CD4-positive, alpha-beta memory T cell (primary cell): ENCODE measurements at regions of chr18 and their contacts with region 1.

Region 1: GRCh38 chr18:3447895-3448837 is 1.8 kb upstream of the TGIF1 start:
- DNase-seq: peak; percentile 84 to 91 (median 89)
- H3K4me3 ChIP-seq: peak overlapping the region; percentile 74 to 84
- H3K4me3 Mint-ChIP-seq: peak overlapping the region; percentile 93 to 98 (median 96)
- H3K27ac ChIP-seq: peak overlapping the region; percentile 94
- H3K27ac Mint-ChIP-seq: peak overlapping the region; percentile 99 to 100 (median 100)
- H3K4me1 ChIP-seq: peaks cover 21% of the 10 kb centered on the region
- H3K4me1 Mint-ChIP-seq: peaks cover 9 to 53% (median 22%) of the 10 kb centered on the region in 4 donors
- H3K27me3 ChIP-seq: no peaks in the 10 kb centered on the region
- H3K27me3 Mint-ChIP-seq: peaks cover 0 to 6% of the 10 kb centered on the region in 2 donors

Region 2: DNA sequence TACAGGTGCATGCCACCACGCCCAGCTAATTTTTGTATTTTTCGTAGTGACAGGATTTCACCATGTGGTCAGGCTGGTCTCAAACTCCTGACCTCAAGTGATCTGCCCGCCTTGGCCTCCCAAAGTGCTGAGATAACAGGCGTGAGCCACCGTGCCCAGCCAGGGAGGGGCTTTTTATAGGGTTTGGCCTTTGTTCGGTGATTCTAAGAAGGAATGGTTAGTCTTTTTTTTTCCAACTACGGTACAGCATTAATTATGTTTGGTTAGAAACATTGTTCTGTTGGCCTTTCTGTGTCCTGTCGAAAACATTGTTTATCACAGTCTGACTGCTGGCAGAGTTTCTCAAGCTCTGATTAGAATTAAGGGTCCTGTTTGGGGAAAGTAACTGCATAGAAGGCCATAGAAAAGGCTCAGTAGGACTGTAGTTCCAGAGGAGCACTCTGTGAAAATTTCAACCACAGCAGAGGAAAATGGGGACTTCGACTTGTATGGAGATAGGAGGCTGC is 812.0 kb before region 1 on chr18:
- CTCF ChIA-PET with region 1: no interaction called
- POLR2A ChIA-PET with region 1: interaction called, 11 read pairs
- intact Hi-C with region 1: no loop called
- DNase-seq: no peak
- H3K4me3 ChIP-seq: peak overlapping the region; percentile 19 to 31
- H3K4me3 Mint-ChIP-seq: peak overlapping the region; percentile 81 to 88 (median 85)
- H3K27ac ChIP-seq: peak overlapping the region; percentile 87
- H3K27ac Mint-ChIP-seq: peak overlapping the region in 6 of 7 donors; percentile 97 to 99 (median 98)
- H3K4me1 ChIP-seq: peaks cover 88% of the 10 kb centered on the region
- H3K4me1 Mint-ChIP-seq: peaks cover 61 to 100% (median 88%) of the 10 kb centered on the region in 4 donors
- H3K27me3 ChIP-seq: no peaks in the 10 kb centered on the region
- H3K27me3 Mint-ChIP-seq: peaks cover 0 to 2% of the 10 kb centered on the region in 2 donors

Region 3: DNA sequence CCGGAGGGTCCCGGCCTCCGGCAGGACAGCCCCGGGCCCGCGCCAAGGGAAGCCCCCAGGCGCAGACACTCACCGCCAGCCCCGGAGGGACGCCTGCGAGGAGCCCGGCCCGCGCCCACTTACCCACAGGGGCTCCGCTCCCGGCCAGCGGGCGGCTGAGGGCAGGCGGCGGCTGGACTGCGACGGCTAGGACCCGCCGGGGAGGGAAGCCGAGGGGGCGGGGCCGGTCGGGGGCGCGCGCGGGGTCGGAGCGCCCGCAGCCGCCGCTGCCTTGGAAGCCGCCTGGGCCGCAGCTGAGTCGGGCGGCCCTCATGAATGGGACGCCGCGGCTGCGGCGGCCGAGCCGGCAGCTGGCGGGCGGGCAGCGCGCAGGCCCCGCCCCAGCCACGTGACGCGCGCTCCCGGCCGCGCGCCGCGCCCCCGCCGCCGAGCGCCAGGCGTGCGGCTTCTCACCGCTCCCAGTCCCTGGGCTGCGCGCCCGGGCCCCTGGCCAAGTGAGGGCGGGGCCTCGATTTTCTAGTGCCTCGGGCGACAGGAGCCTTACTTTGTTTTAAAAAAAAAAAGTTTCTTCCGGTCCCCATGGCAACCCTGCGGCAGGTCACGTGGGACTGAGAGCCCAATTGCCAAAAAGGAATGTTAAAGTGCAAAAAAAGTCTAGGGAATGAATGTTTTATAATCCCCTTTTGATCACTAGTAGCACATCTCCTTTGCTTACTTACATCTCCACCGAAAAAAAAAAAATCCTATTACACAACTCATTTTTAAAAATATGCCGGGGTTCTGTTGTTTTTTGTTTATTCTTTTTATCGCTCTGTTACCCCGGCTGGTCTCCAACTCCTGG is 435.0 kb before region 1 on chr18 and contains the start of gene LPIN2:
- CTCF ChIA-PET with region 1: no interaction called
- POLR2A ChIA-PET with region 1: interaction called, 3 read pairs
- intact Hi-C with region 1: loop called (anchors 2 kb)
- DNase-seq: peak; percentile 97 to 98 (median 98)
- H3K4me3 ChIP-seq: peak within 1 kb of the TSS; percentile 55 to 70
- H3K4me3 Mint-ChIP-seq: peak within 1 kb of the TSS; percentile 93 to 99 (median 96)
- H3K27ac ChIP-seq: peak within 1 kb of the TSS; percentile 63
- H3K27ac Mint-ChIP-seq: peak within 1 kb of the TSS; percentile 94 to 98 (median 98)
- H3K4me1 ChIP-seq: peaks cover 68% of the 10 kb centered on the region
- H3K4me1 Mint-ChIP-seq: peaks cover 51 to 75% (median 68%) of the 10 kb centered on the region in 4 donors
- H3K27me3 ChIP-seq: no peaks in the 10 kb centered on the region
- H3K27me3 Mint-ChIP-seq: no peaks in the 10 kb centered on the region
- total RNA-seq, gene LPIN2: 95.4 to 103 TPM

Region 4: DNA sequence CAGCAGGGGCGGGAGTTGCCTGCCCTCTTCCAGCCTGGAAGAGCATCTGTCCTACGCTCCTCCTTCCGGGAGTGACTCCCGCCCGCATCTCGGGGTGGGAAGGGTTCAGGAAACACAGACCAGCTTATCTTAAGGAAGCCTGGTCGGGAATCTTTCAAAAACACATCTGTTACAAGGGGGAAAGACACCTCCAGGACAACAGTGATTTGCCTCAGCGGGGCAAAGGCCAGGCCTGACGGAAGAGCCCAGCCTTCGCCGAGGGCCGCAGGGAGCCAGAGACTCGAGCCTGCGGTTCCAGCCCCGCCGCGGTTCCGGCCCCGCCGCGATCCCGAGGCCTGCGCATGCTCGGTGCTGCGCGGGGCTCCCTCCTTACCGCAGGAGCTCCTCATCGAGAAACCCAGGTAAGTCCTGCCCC is 36.3 kb before region 1 on chr18:
- CTCF ChIA-PET with region 1: no interaction called
- POLR2A ChIA-PET with region 1: interaction called, 4 read pairs
- intact Hi-C with region 1: loop called (anchors 2 kb)
- DNase-seq: peak in 4 of 5 donors; percentile 16 to 33 (median 20)
- H3K4me3 ChIP-seq: no peak overlapping the region
- H3K4me3 Mint-ChIP-seq: peak overlapping the region; percentile 57 to 79 (median 66)
- H3K27ac ChIP-seq: no peak overlapping the region
- H3K27ac Mint-ChIP-seq: peak overlapping the region in 3 of 7 donors; percentile 29 to 78 (median 37)
- H3K4me1 ChIP-seq: peaks cover 3% of the 10 kb centered on the region
- H3K4me1 Mint-ChIP-seq: peaks cover 2 to 10% (median 6%) of the 10 kb centered on the region in 4 donors
- H3K27me3 ChIP-seq: no peaks in the 10 kb centered on the region
- H3K27me3 Mint-ChIP-seq: no peaks in the 10 kb centered on the region

Region 5: GRCh38 chr18:3585656-3586509 is 137.7 kb after region 1 on chr18:
- CTCF ChIA-PET with region 1: interaction called, 43 read pairs
- POLR2A ChIA-PET with region 1: interaction called, 164 read pairs
- intact Hi-C with region 1: no loop called
- DNase-seq: peak; percentile 55 to 69 (median 60)
- H3K4me3 ChIP-seq: no peak overlapping the region
- H3K4me3 Mint-ChIP-seq: peak overlapping the region in 4 of 8 donors; percentile 14 to 39 (median 30)
- H3K27ac ChIP-seq: no peak overlapping the region
- H3K27ac Mint-ChIP-seq: peak overlapping the region in 6 of 7 donors; percentile 64 to 86 (median 76)
- H3K4me1 ChIP-seq: peaks cover 13% of the 10 kb centered on the region
- H3K4me1 Mint-ChIP-seq: peaks cover 7 to 19% (median 12%) of the 10 kb centered on the region in 4 donors
- H3K27me3 ChIP-seq: no peaks in the 10 kb centered on the region
- H3K27me3 Mint-ChIP-seq: no peaks in the 10 kb centered on the region

Region 6: DNA sequence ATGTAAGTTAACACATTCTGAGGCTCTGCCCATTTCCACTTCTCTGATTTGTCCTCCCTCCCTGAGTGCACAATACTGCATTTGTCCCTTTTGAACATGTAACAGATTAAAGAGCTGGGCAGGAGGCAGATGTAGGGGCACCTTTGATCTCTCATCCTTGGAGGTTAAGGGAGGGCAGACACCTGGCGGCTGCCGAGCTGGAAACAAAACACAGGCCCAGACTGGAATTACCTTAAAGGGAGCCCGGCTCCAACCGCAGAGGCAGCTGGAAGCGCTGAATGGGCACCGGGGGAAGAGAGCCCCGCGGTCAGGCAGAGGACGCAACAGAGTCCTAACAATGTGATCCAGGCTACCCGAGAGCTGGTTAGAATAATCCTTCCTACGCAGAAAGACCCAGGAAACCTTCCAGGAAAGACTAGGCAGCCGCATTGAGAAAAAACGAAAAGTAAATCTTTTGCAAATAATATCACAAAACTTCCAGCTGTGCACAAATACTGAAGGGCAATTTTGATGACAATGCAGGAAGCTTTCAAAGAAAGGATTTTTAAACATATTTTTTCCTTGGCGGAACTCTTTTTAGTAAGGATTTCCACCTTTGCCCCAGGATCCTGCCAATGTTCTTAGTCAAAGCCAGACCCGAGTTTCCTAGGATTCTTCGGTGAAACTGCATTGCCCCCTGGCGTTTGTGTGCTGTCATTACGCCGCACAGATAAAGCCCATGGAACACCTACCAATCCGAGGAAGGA is 217.8 kb after region 1 on chr18:
- CTCF ChIA-PET with region 1: interaction called, 80 read pairs
- POLR2A ChIA-PET with region 1: interaction called, 7 read pairs
- intact Hi-C with region 1: no loop called
- DNase-seq: peak; percentile 62 to 70 (median 68)
- H3K4me3 ChIP-seq: no peak overlapping the region
- H3K4me3 Mint-ChIP-seq: peak overlapping the region in 5 of 8 donors; percentile 22 to 64 (median 38)
- H3K27ac ChIP-seq: no peak overlapping the region
- H3K27ac Mint-ChIP-seq: peak overlapping the region in 1 of 7 donors; percentile 35
- H3K4me1 ChIP-seq: peaks cover 5% of the 10 kb centered on the region
- H3K4me1 Mint-ChIP-seq: peaks cover 2 to 9% (median 5%) of the 10 kb centered on the region in 4 donors
- H3K27me3 ChIP-seq: no peaks in the 10 kb centered on the region
- H3K27me3 Mint-ChIP-seq: peaks cover 2 to 3% of the 10 kb centered on the region in 2 donors

Region 7: GRCh38 chr18:3889803-3890202 is 441.6 kb after region 1 on chr18:
- CTCF ChIA-PET with region 1: no interaction called
- POLR2A ChIA-PET with region 1: no interaction called
- intact Hi-C with region 1: no loop called
- DNase-seq: no peak
- H3K4me3 ChIP-seq: no peak overlapping the region
- H3K4me3 Mint-ChIP-seq: no peak overlapping the region
- H3K27ac ChIP-seq: no peak overlapping the region
- H3K27ac Mint-ChIP-seq: no peak overlapping the region
- H3K4me1 ChIP-seq: no peaks in the 10 kb centered on the region
- H3K4me1 Mint-ChIP-seq: peaks cover 0 to 3% (median 0%) of the 10 kb centered on the region in 4 donors
- H3K27me3 ChIP-seq: no peaks in the 10 kb centered on the region
- H3K27me3 Mint-ChIP-seq: peaks cover 5 to 7% of the 10 kb centered on the region in 2 donors